Activated B cell treated with CpG ODN at 0.5 μM for 24 hours (primary cell): ENCODE measurements at regions of chr18 and their contacts with region 1.

Region 1: DNA sequence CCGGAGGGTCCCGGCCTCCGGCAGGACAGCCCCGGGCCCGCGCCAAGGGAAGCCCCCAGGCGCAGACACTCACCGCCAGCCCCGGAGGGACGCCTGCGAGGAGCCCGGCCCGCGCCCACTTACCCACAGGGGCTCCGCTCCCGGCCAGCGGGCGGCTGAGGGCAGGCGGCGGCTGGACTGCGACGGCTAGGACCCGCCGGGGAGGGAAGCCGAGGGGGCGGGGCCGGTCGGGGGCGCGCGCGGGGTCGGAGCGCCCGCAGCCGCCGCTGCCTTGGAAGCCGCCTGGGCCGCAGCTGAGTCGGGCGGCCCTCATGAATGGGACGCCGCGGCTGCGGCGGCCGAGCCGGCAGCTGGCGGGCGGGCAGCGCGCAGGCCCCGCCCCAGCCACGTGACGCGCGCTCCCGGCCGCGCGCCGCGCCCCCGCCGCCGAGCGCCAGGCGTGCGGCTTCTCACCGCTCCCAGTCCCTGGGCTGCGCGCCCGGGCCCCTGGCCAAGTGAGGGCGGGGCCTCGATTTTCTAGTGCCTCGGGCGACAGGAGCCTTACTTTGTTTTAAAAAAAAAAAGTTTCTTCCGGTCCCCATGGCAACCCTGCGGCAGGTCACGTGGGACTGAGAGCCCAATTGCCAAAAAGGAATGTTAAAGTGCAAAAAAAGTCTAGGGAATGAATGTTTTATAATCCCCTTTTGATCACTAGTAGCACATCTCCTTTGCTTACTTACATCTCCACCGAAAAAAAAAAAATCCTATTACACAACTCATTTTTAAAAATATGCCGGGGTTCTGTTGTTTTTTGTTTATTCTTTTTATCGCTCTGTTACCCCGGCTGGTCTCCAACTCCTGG is at the start of gene LPIN2:
- DNase-seq: peak; percentile 91
- ATAC-seq: peak; percentile 86
- H3K4me3 Mint-ChIP-seq: peak within 1 kb of the TSS; percentile 95
- H3K27ac Mint-ChIP-seq: peak within 1 kb of the TSS; percentile 88
- H3K4me1 Mint-ChIP-seq: peaks cover 59% of the 10 kb centered on the region
- H3K27me3 Mint-ChIP-seq: no peaks in the 10 kb centered on the region
- CTCF ChIP-seq: no peak
- total RNA-seq, gene LPIN2: 21.8 and 24.4 TPM in 2 replicates

Region 2: GRCh38 chr18:2958819-2959298 is 54.3 kb before region 1 on chr18:
- CTCF ChIA-PET with region 1: no interaction called
- POLR2A ChIA-PET with region 1: interaction called, 3 read pairs
- intact Hi-C with region 1: loop called (anchors 1 kb)
- DNase-seq: no peak
- ATAC-seq: no peak
- H3K4me3 Mint-ChIP-seq: peak overlapping the region; percentile 32
- H3K27ac Mint-ChIP-seq: peak overlapping the region; percentile 97
- H3K4me1 Mint-ChIP-seq: peaks cover 82% of the 10 kb centered on the region
- H3K27me3 Mint-ChIP-seq: no peaks in the 10 kb centered on the region
- CTCF ChIP-seq: no peak

Region 3: DNA sequence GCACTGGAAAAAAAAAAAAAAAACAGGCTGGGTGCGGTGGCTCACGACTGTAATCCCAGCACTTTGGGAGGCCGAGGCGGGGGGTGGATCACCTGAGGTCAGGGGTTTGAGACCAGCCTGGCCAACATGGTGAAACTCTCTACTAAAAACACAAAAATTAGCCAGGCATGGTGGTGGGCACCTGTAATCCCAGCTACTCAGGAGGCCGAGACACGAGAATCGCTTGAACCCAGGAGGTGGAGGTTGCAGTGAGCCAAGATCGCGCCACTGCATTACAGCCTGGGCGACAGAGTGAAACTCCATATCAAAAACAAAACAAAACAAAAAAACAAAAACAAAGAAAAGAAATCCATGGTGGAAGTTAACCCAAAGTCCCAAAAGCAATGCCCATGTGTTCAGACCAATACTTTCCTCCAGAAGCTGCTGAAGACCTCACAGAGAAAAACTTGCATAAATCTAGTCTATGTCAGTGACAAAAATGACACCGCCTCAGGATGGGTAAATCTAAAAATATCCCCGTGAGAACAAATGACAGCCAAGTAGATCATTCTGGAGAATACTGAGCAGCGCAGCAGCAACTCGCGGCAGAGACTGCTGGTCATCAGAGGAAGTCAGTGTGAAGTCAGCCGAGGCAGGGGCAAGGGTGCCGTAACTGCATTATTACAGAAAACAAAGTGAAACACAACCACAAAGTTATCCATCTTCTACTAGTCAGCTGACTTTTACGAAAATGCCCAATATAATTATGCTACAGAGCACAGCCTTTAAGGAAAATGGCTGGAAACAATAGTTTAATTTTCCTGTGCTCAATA is 41.2 kb before region 1 on chr18:
- CTCF ChIA-PET with region 1: no interaction called
- POLR2A ChIA-PET with region 1: no interaction called
- intact Hi-C with region 1: loop called (anchors 1 kb)
- DNase-seq: peak; percentile 53
- ATAC-seq: peak; percentile 80
- H3K4me3 Mint-ChIP-seq: peak overlapping the region; percentile 79
- H3K27ac Mint-ChIP-seq: peak overlapping the region; percentile 94
- H3K4me1 Mint-ChIP-seq: peaks cover 82% of the 10 kb centered on the region
- H3K27me3 Mint-ChIP-seq: no peaks in the 10 kb centered on the region
- CTCF ChIP-seq: no peak

Region 4: GRCh38 chr18:2994603-2995432 is 18.4 kb before region 1 on chr18:
- CTCF ChIA-PET with region 1: interaction called, 12 read pairs
- POLR2A ChIA-PET with region 1: no interaction called
- intact Hi-C with region 1: loop called (anchors 1 kb)
- DNase-seq: peak; percentile 47
- ATAC-seq: peak; percentile 97
- H3K4me3 Mint-ChIP-seq: peak overlapping the region; percentile 48
- H3K27ac Mint-ChIP-seq: peak overlapping the region; percentile 50
- H3K4me1 Mint-ChIP-seq: peaks cover 34% of the 10 kb centered on the region
- H3K27me3 Mint-ChIP-seq: no peaks in the 10 kb centered on the region
- CTCF ChIP-seq: no peak

Region 5: DNA sequence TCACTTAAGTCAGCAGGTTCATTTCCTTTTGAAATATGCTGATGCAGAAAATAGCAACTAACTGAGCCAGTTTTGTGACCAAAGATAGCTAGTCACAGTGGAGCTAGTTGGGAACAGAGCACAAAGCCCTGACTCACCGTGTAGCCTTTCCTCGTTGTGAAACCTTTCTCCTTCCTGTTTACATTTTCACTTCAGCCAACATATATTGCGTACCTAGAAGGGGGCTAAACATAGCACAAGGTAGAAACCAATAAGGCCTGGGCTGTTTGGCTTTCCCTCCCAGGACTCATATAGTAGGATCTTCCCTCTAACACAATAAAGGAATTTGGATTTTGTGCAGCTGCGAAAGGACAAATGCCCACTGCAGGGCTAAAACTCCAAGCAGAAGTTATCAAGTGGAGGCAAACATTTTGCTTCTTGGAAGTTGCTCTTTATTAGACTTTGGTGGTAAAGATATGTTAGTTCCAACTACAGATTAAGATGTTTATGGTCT is 24.3 kb after region 1 on chr18:
- CTCF ChIA-PET with region 1: no interaction called
- POLR2A ChIA-PET with region 1: no interaction called
- intact Hi-C with region 1: loop called (anchors 1 kb)
- DNase-seq: no peak
- ATAC-seq: no peak
- H3K4me3 Mint-ChIP-seq: no peak overlapping the region
- H3K27ac Mint-ChIP-seq: no peak overlapping the region
- H3K4me1 Mint-ChIP-seq: peaks cover 6% of the 10 kb centered on the region
- H3K27me3 Mint-ChIP-seq: no peaks in the 10 kb centered on the region
- CTCF ChIP-seq: no peak

Region 6: GRCh38 chr18:3062798-3063680 is 49.9 kb after region 1 on chr18:
- CTCF ChIA-PET with region 1: interaction called, 9 read pairs
- POLR2A ChIA-PET with region 1: no interaction called
- intact Hi-C with region 1: loop called (anchors 1 kb)
- DNase-seq: peak; percentile 29
- ATAC-seq: peak; percentile 59
- H3K4me3 Mint-ChIP-seq: no peak overlapping the region
- H3K27ac Mint-ChIP-seq: no peak overlapping the region
- H3K4me1 Mint-ChIP-seq: peaks cover 49% of the 10 kb centered on the region
- H3K27me3 Mint-ChIP-seq: no peaks in the 10 kb centered on the region
- CTCF ChIP-seq: no peak

Region 7: DNA sequence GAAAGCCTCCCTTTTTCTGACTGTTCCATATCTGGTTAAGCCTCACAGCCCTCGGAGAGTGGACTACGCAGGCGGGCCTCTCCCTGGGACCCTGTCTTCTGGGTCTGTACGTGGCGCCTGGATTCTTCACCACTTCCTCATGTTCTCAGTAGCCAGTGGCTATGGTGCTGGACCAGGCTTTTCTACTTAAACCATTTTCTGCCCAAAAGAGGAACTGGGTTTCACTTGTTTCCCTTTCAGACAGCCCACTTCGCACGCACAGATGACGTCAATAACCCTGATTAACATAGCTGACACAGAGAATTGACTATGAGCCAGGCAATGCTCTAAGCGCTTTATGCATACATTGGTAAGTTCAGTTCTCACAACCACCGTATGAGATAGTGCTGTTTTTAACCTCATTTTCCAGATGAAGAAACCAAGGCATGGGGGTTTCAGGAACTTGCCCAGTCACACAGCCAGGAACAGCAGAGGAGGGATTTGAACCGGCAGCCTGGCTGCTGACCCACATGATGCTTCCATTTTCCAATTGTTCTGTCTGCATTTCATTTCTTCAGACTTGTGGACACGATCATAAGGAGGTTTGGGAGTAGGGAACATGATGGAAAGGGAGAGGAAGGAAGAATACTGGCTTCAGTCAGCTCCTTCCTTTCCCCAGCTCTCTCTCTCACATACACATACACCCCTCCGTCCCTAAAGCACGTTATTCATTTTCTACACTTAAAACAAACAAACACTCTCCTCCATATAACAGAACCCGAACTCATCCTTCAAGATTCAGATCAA is 164.9 kb after region 1 on chr18:
- CTCF ChIA-PET with region 1: interaction called, 3 read pairs
- POLR2A ChIA-PET with region 1: interaction called, 4 read pairs
- intact Hi-C with region 1: loop called (anchors 1 kb)
- DNase-seq: peak; percentile 66
- ATAC-seq: peak; percentile 86
- H3K4me3 Mint-ChIP-seq: peak overlapping the region; percentile 76
- H3K27ac Mint-ChIP-seq: peak overlapping the region; percentile 99
- H3K4me1 Mint-ChIP-seq: peaks cover 32% of the 10 kb centered on the region
- H3K27me3 Mint-ChIP-seq: no peaks in the 10 kb centered on the region
- CTCF ChIP-seq: no peak

Region 8: DNA sequence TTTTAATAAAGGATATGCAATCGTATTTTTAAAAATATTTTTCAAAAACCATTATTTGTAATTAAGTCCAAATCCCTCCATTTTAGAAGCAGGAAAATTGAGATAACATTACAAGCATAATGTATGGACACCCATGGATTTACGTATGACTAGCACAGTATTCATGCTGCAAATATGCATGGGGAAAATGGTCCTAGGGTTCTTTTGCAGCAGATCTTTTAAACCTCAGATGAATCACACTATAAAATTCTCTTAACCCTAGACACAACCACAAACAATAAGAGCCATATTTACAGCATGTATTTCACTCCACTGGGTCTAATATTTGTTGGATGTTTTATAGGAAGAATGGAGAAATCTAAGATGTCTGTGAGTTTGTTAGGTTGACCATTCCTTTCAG is 890.2 kb after region 1 on chr18:
- CTCF ChIA-PET with region 1: no interaction called
- POLR2A ChIA-PET with region 1: no interaction called
- intact Hi-C with region 1: no loop called
- DNase-seq: no peak
- ATAC-seq: no peak
- H3K4me3 Mint-ChIP-seq: no peak overlapping the region
- H3K27ac Mint-ChIP-seq: no peak overlapping the region
- H3K4me1 Mint-ChIP-seq: no peaks in the 10 kb centered on the region
- H3K27me3 Mint-ChIP-seq: peaks cover 4% of the 10 kb centered on the region
- CTCF ChIP-seq: no peak